ENCODE measurements at regions of chr22 and their contacts with region 1.

Region 1: GRCh38 chr22:25039754-25040153 is 87.2 kb downstream of the KIAA1671 start:
- DNase-seq: no peak
- CTCF ChIP-seq: no peak

Region 2: DNA sequence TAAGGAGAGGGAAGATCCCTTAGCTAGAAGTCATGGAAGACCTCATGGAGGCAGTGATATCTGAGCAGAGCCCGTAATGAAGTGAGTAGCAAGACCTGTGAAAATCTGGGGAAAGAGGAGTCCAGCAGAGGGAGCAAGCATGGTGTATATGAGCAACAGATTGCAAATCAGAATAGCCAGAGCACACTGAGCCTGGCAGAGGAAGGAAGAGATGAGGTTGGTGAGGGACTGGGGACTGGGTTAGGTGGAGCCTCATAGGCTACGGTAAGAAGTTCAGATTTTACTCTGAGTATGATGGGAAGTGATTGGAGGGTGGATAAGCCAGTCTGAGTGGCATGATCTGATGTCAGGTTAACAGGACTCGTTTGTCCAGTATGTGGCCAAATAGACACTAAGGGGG is 102.6 kb before region 1 on chr22:
- in situ Hi-C with region 1: no loop called
- DNase-seq: no peak
- CTCF ChIP-seq: no peak

Region 3: GRCh38 chr22:24948356-24949202 is 91.2 kb before region 1 on chr22:
- in situ Hi-C with region 1: loop called (anchors 5 kb)
- DNase-seq: no peak
- CTCF ChIP-seq: no peak

Region 4: GRCh38 chr22:25159028-25159427 is 119.3 kb after region 1 on chr22:
- in situ Hi-C with region 1: no loop called
- DNase-seq: no peak
- CTCF ChIP-seq: no peak

Measured in GM13976 (cell line).